Caco-2 (cell line): ENCODE measurements at regions of chr11 and their contacts with region 1.

Region 1: GRCh38 chr11:112280268-112281126 is 19.8 kb upstream of the PLET1 start:
- DNase-seq: peak; percentile 89 to 90
- H3K4me3 ChIP-seq: peak overlapping the region; percentile 28
- H3K4me3 Mint-ChIP-seq: peak overlapping the region; percentile 75
- H3K27ac Mint-ChIP-seq: no peak overlapping the region
- H3K4me1 ChIP-seq: peaks cover 34% of the 10 kb centered on the region
- H3K4me1 Mint-ChIP-seq: peaks cover 34% of the 10 kb centered on the region
- H3K27me3 ChIP-seq: no peaks in the 10 kb centered on the region
- H3K27me3 Mint-ChIP-seq: peaks cover 3% of the 10 kb centered on the region
- CTCF ChIP-seq: peak; percentile 86 to 97

Region 2: GRCh38 chr11:112062923-112063322 is 217.6 kb before region 1 on chr11:
- CTCF ChIA-PET with region 1: no interaction called
- POLR2A ChIA-PET with region 1: no interaction called
- intact Hi-C with region 1: no loop called
- DNase-seq: no peak
- H3K4me3 ChIP-seq: no peak overlapping the region
- H3K4me3 Mint-ChIP-seq: no peak overlapping the region
- H3K27ac Mint-ChIP-seq: no peak overlapping the region
- H3K4me1 ChIP-seq: no peaks in the 10 kb centered on the region
- H3K4me1 Mint-ChIP-seq: no peaks in the 10 kb centered on the region
- H3K27me3 ChIP-seq: no peaks in the 10 kb centered on the region
- H3K27me3 Mint-ChIP-seq: no peaks in the 10 kb centered on the region
- CTCF ChIP-seq: no peak

Region 3: DNA sequence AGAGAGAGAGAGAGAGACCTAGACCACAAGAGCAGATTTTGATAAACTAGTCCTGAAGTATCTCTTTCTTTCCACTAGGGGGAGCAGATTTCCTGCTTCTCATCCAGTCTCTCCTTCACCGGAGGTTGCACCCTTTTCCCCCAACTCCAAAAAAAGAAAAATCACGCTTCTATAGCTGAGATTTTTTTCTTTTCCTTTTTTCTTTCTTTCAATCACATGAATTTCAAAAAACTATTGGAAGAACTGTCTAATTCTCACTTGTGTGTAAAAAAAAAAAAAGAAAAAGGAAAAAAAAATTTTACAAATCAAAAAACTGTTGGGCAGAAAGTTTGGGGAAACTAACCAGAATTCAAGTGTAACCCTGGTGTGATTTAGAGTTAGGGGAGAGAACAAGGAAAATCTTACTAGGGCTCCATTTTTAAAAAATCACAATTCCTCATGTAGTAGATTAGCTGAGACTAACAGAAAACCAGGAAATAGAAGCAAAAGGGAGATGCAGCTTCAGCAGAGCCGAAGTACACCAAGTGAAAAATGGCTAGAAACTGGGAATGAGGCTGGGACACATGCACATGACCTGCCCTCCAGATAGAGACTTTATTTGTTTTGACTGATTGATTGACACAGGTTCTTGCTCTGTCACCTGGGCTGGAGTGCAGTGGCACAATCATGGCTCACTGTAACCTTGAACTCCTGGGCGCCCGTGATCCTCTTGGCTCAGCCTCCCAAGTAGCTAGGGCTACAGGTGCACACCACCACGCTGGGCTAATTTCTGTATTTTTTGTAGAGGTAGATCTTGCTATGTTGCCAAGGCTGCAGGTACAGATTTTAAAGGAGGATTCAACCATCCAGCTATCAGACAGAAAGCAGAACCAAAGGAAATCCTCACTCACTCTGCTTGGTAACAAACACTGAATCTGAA is 166.7 kb before region 1 on chr11:
- CTCF ChIA-PET with region 1: interaction called, 15 read pairs
- POLR2A ChIA-PET with region 1: no interaction called
- intact Hi-C with region 1: loop called (anchors 1 kb)
- DNase-seq: peak in 1 of 2 experiments; percentile 66
- H3K4me3 ChIP-seq: no peak overlapping the region
- H3K4me3 Mint-ChIP-seq: no peak overlapping the region
- H3K27ac Mint-ChIP-seq: no peak overlapping the region
- H3K4me1 ChIP-seq: no peaks in the 10 kb centered on the region
- H3K4me1 Mint-ChIP-seq: no peaks in the 10 kb centered on the region
- H3K27me3 ChIP-seq: no peaks in the 10 kb centered on the region
- H3K27me3 Mint-ChIP-seq: no peaks in the 10 kb centered on the region
- CTCF ChIP-seq: peak; percentile 88 to 92

Region 4: GRCh38 chr11:112219476-112220232 is 60.8 kb before region 1 on chr11:
- CTCF ChIA-PET with region 1: interaction called, 139 read pairs
- POLR2A ChIA-PET with region 1: interaction called, 3 read pairs
- intact Hi-C with region 1: loop called (anchors 1 kb)
- DNase-seq: peak; percentile 60 to 78
- H3K4me3 ChIP-seq: no peak overlapping the region
- H3K4me3 Mint-ChIP-seq: no peak overlapping the region
- H3K27ac Mint-ChIP-seq: no peak overlapping the region
- H3K4me1 ChIP-seq: peaks cover 26% of the 10 kb centered on the region
- H3K4me1 Mint-ChIP-seq: peaks cover 15% of the 10 kb centered on the region
- H3K27me3 ChIP-seq: no peaks in the 10 kb centered on the region
- H3K27me3 Mint-ChIP-seq: no peaks in the 10 kb centered on the region
- CTCF ChIP-seq: peak; percentile 71 to 98

Region 5: DNA sequence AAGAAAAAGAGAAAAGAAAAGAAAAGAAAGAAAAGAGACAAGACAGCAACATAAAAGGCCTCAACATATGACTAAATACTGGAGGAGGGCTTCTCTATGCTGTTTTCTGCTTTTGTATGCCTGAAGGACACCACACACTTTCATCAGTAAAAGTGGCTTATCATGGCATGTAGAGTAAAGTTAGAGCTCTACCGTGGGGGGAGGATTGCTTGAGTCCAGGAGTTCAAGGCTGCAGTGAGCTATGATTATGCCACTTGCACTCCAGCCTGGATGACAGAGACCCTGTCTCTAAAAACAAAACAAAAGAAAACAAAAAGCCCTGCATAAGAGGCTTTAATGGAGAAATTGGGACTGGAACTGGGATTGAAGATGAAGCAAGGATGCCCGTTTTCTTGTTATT is 48.5 kb before region 1 on chr11:
- CTCF ChIA-PET with region 1: interaction called, 17 read pairs
- POLR2A ChIA-PET with region 1: no interaction called
- intact Hi-C with region 1: no loop called
- DNase-seq: no peak
- H3K4me3 ChIP-seq: no peak overlapping the region
- H3K4me3 Mint-ChIP-seq: no peak overlapping the region
- H3K27ac Mint-ChIP-seq: no peak overlapping the region
- H3K4me1 ChIP-seq: peaks cover 11% of the 10 kb centered on the region; the same call in 1 of the 2 replicates
- H3K4me1 Mint-ChIP-seq: peaks cover 22% of the 10 kb centered on the region
- H3K27me3 ChIP-seq: no peaks in the 10 kb centered on the region
- H3K27me3 Mint-ChIP-seq: no peaks in the 10 kb centered on the region
- CTCF ChIP-seq: no peak

Region 6: DNA sequence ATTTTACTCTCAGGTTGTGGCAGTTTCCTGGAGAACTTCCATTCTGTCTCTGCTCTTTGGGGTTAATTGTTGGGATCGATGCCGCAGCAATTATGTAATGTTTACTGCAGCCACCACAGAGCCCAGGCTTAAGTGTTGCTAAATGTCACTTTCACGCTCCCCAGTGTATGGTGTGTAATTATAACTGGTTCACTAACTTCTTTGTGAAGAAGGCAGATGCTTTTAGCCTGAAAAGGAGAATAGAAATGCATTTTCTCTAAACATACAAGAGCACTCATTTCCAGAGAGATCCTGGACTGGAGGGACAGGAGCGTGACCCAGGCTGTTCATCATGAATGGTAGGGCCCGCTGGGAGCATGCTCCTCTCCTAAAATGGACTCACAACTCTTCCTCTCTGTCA is 112.4 kb after region 1 on chr11:
- CTCF ChIA-PET with region 1: no interaction called
- POLR2A ChIA-PET with region 1: no interaction called
- intact Hi-C with region 1: no loop called
- DNase-seq: no peak
- H3K4me3 ChIP-seq: no peak overlapping the region
- H3K4me3 Mint-ChIP-seq: no peak overlapping the region
- H3K27ac Mint-ChIP-seq: no peak overlapping the region
- H3K4me1 ChIP-seq: no peaks in the 10 kb centered on the region
- H3K4me1 Mint-ChIP-seq: peaks cover 8% of the 10 kb centered on the region
- H3K27me3 ChIP-seq: no peaks in the 10 kb centered on the region
- H3K27me3 Mint-ChIP-seq: peaks cover 16% of the 10 kb centered on the region
- CTCF ChIP-seq: no peak

Region 7: DNA sequence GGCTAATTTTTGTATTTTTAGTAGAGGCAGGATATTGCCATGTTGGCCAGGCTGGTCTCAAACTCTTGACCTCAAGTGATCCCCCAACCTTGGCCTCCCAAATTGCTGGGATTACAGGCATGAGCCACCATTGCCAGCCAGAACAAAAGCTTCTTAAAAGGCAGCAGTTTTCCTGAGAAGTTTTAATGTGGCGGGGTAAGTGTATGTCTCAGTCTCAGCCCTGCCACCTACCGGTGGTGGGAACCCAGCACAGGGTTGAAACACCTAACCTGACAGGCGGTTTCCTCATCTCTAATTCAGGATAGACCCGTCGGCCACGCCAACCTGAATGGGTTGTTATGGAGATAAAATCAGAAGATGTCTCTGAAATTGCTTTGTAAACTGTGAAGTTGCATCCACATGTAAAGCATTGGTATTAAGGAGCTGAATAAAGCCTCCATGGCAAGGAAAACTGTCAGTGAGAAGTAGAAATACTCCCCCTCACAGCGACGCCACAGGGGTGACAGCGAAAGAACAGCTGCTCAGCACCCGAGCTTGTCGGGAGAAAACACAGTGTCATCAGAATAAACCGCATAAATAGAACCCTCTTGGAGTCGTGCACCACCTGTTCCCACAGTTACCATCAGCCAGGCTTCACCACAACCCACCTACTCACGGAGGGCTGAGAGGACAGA is 514.8 kb after region 1 on chr11:
- CTCF ChIA-PET with region 1: no interaction called
- POLR2A ChIA-PET with region 1: no interaction called
- intact Hi-C with region 1: loop called (anchors 10 kb)
- DNase-seq: peak; percentile 66 to 76
- H3K4me3 ChIP-seq: no peak overlapping the region
- H3K4me3 Mint-ChIP-seq: no peak overlapping the region
- H3K27ac Mint-ChIP-seq: no peak overlapping the region
- H3K4me1 ChIP-seq: no peaks in the 10 kb centered on the region
- H3K4me1 Mint-ChIP-seq: no peaks in the 10 kb centered on the region
- H3K27me3 ChIP-seq: peaks cover 2% of the 10 kb centered on the region
- H3K27me3 Mint-ChIP-seq: peaks cover 19% of the 10 kb centered on the region
- CTCF ChIP-seq: peak; percentile 89